ENCODE measurements at regions of chr3 and their contacts with region 1.

Region 1: DNA sequence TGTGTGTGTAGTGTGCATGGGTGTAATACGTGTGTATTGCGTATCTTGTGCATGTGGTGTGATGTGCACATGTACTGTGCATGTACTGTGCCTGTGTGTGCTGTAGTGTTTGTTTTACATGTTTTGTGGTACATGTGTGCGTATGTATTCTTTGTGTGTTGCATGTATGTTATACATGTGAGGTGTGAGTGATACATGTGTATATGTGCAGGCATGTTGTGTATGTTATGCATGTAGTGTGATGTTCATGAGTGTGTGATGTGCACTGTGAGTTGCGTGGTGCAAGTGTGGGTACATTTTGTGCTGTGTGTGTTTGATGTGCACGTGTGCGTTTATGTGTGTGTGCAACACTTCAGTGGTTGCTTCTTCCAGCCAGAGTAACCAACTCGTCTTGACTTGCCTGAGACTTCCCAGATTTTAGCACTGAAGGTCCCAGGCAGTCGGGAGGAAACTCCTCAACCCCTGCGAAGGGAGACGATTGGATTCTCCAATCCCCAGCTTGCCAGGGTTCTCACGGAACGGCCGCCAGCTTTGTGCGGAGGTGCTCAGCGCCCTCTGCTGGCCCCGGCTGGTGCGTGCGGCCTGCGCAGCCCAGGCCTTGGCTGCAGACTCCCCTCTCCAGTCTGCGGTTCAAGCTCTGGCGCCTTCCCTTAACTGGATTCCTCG is 3.6 kb downstream of the GALNT15 start:
- DNase-seq: peak; percentile 89
- ATAC-seq: peak; percentile 72

Region 2: DNA sequence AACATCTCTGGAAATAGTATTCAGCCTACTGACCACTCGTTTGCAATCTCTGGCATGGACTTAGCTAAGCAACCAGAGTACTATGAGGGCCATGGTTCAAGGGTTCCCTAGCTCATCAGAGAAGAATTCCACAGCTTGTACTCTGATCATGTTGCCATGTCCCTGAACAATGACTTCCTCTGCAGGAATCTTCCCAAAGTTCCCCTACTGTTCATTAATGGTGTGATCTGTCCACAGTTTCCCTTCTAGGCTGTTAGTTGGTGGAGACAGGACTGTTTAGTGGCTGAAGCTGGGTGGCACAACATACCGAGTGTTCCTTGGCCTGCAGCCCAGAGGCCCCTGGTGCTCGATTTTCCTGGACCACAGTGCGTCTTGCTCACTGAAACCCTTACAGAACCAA is 48.0 kb before region 1 on chr3:
- intact Hi-C with region 1: loop called (anchors 5 kb)
- DNase-seq: no peak
- ATAC-seq: peak; percentile 16

Region 3: DNA sequence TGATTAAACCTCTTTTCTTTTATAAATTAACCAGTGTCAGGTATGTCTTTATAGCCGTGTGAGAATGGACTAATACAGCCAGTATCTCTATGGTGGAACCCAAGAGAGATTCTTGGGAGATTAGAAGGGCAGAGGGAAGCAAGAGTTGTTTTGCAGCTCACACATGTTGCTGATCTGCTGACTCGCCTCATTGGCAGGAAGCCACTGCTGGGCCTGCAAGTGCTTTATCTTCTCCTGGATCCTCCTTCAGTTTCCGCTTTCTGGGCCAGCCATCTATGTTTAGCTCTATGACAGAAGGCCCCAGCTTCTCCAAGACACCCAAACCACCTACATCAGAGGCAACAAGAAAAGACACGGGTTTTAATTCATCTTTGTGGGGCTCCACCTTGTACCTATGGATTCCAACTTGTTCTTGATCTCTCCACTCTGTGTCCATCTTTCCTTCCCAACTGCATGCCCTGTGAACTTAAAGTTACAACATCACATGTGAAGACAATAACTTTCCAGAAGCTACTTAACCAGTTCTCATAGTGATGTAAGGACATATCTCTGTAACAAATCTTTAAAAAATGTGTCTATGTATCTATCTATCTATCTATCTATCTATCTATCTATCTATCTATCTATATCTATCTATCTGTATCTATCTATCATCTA is 26.9 kb before region 1 on chr3:
- intact Hi-C with region 1: loop called (anchors 2 kb)
- DNase-seq: peak; percentile 84
- ATAC-seq: peak; percentile 75

Region 4: GRCh38 chr3:16247276-16248061 is 69.4 kb after region 1 on chr3:
- intact Hi-C with region 1: loop called (anchors 5 kb)
- DNase-seq: peak; percentile 83
- ATAC-seq: peak; percentile 60

Measured in Right ventricle myocardium inferior (tissue), 1 donor.